ENCODE measurements at regions of chr4 and their contacts with region 1.

Region 1: GRCh38 chr4:76067652-76068286 is 6.7 kb upstream of the ART3 start:
- DNase-seq: peak; percentile 67 to 75
- H3K4me3 ChIP-seq: no peak overlapping the region
- H3K27ac ChIP-seq: no peak overlapping the region
- H3K4me1 ChIP-seq: no peaks in the 10 kb centered on the region
- H3K27me3 ChIP-seq: no peaks in the 10 kb centered on the region
- CTCF ChIP-seq: peak; percentile 38 to 84 (median 62)
- POLR2A ChIP-seq: no peak

Region 2: GRCh38 chr4:75895744-75896314 is 171.9 kb before region 1 on chr4:
- intact Hi-C with region 1: loop called (anchors 10 kb)
- DNase-seq: no peak
- H3K4me3 ChIP-seq: no peak overlapping the region
- H3K27ac ChIP-seq: no peak overlapping the region
- H3K4me1 ChIP-seq: no peaks in the 10 kb centered on the region
- H3K27me3 ChIP-seq: no peaks in the 10 kb centered on the region
- CTCF ChIP-seq: peak; percentile 31 to 74 (median 50)
- POLR2A ChIP-seq: no peak

Region 3: GRCh38 chr4:75995727-75996126 is 72.0 kb before region 1 on chr4:
- intact Hi-C with region 1: loop called (anchors 5 kb)
- DNase-seq: peak in 1 of 2 donors; percentile 18
- H3K4me3 ChIP-seq: no peak overlapping the region
- H3K27ac ChIP-seq: no peak overlapping the region
- H3K4me1 ChIP-seq: no peaks in the 10 kb centered on the region
- H3K27me3 ChIP-seq: no peaks in the 10 kb centered on the region
- CTCF ChIP-seq: peak; percentile 12 to 71 (median 56)
- POLR2A ChIP-seq: no peak